BJ (cell line): ENCODE measurements at regions of chr6 and their contacts with region 1.

Region 1: GRCh38 chr6:110053395-110054240 is 75.5 kb downstream of the GPR6 start:
- DNase-seq: no peak
- H3K4me3 ChIP-seq: no peak overlapping the region
- H3K27me3 ChIP-seq: peaks cover 6% of the 10 kb centered on the region
- CTCF ChIP-seq: peak; percentile 80

Region 2: GRCh38 chr6:109705258-109705657 is 348.4 kb before region 1 on chr6:
- CTCF ChIA-PET with region 1: interaction called, 15 read pairs
- POLR2A ChIA-PET with region 1: no interaction called
- DNase-seq: peak; percentile 53
- H3K4me3 ChIP-seq: no peak overlapping the region
- H3K27me3 ChIP-seq: no peaks in the 10 kb centered on the region
- CTCF ChIP-seq: peak; percentile 95

Region 3: GRCh38 chr6:109961666-109962065 is 92.0 kb before region 1 on chr6:
- CTCF ChIA-PET with region 1: no interaction called
- POLR2A ChIA-PET with region 1: no interaction called
- DNase-seq: no peak
- H3K4me3 ChIP-seq: no peak overlapping the region
- H3K27me3 ChIP-seq: no peaks in the 10 kb centered on the region
- CTCF ChIP-seq: no peak

Region 4: GRCh38 chr6:110125361-110125760 is 71.7 kb after region 1 on chr6:
- CTCF ChIA-PET with region 1: no interaction called
- POLR2A ChIA-PET with region 1: no interaction called
- DNase-seq: no peak
- H3K4me3 ChIP-seq: no peak overlapping the region
- H3K27me3 ChIP-seq: no peaks in the 10 kb centered on the region
- CTCF ChIP-seq: no peak